CD4-positive, alpha-beta memory T cell (primary cell): ENCODE measurements at regions of chr12 and their contacts with region 1.

Region 1: DNA sequence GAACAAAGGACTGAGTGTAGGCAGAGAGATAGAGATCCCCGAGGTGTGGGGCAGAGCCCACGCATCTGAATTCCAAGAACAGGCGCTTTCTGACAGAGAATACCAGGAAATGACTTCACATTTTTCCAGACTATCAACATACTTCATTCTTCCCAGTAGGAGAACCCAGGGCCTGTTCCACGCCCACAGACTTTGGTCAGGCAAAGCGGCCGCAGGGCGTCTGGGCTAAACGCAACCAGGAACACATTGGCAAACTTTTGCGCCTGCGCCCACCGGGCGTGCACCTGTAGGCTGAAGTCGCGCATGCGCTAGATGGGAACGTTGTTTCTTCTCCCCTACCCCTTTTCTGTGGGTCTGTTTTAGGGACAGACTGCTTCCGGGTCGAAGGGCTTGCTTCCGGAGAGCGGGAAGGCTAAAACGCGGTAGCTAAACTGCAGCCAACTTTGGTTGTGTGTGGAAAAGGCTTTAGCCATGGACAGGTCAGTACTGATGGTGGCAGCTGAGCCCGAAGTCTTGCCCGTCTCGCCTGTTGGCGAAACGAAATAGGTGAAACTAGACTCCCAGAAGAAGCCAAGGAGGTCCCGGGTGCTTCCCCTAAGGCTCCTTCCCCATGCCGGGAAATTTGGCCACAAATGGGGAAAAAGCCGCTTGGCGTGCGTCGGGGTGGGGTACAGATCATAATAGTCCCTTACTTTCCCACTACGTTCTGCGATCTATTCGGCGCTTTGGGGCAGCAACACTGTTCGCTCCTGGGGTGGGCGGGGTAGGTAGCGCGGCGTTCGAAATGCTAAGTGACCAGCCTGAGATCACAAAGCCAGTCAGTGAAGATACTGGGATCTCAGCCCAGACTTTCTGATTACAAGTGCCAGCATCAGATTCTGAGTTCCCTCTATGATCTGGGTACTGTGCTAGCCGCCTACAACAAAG is at the start of gene NUP107:
- DNase-seq: peak; percentile 95 to 98 (median 95)
- H3K4me3 ChIP-seq: peak within 1 kb of the TSS; percentile 90 to 98
- H3K4me3 Mint-ChIP-seq: peak within 1 kb of the TSS; percentile 98 to 99 (median 98)
- H3K27ac ChIP-seq: peak within 1 kb of the TSS; percentile 85
- H3K27ac Mint-ChIP-seq: peak within 1 kb of the TSS; percentile 91 to 100 (median 99)
- H3K4me1 ChIP-seq: peaks cover 30% of the 10 kb centered on the region
- H3K4me1 Mint-ChIP-seq: peaks cover 14 to 44% (median 29%) of the 10 kb centered on the region in 4 donors
- H3K27me3 ChIP-seq: no peaks in the 10 kb centered on the region
- H3K27me3 Mint-ChIP-seq: no peaks in the 10 kb centered on the region
- total RNA-seq, gene NUP107: 68.9 to 70.7 TPM

Region 2: GRCh38 chr12:68331869-68332727 is 354.8 kb before region 1 on chr12 and contains the start of gene MDM1:
- CTCF ChIA-PET with region 1: no interaction called
- POLR2A ChIA-PET with region 1: interaction called, 3 read pairs
- intact Hi-C with region 1: loop called (anchors 1 kb)
- DNase-seq: peak; percentile 95 to 98 (median 96)
- H3K4me3 ChIP-seq: peak within 1 kb of the TSS; percentile 60 to 77
- H3K4me3 Mint-ChIP-seq: peak within 1 kb of the TSS; percentile 88 to 93 (median 90)
- H3K27ac ChIP-seq: peak within 1 kb of the TSS; percentile 58
- H3K27ac Mint-ChIP-seq: peak within 1 kb of the TSS; percentile 64 to 95 (median 91)
- H3K4me1 ChIP-seq: peaks cover 30% of the 10 kb centered on the region
- H3K4me1 Mint-ChIP-seq: peaks cover 32 to 49% (median 42%) of the 10 kb centered on the region in 4 donors
- H3K27me3 ChIP-seq: no peaks in the 10 kb centered on the region
- H3K27me3 Mint-ChIP-seq: peaks cover 0 to 2% of the 10 kb centered on the region in 2 donors
- total RNA-seq, gene MDM1: 27.0 to 29.4 TPM

Region 3: GRCh38 chr12:68451261-68452077 is 235.4 kb before region 1 on chr12:
- CTCF ChIA-PET with region 1: no interaction called
- POLR2A ChIA-PET with region 1: interaction called, 3 read pairs
- intact Hi-C with region 1: loop called (anchors 5 kb)
- DNase-seq: peak; percentile 24 to 57 (median 44)
- H3K4me3 ChIP-seq: peak overlapping the region in 1 of 2 donors; percentile 3
- H3K4me3 Mint-ChIP-seq: peak overlapping the region; percentile 66 to 90 (median 84)
- H3K27ac ChIP-seq: peak overlapping the region; percentile 46
- H3K27ac Mint-ChIP-seq: peak overlapping the region; percentile 74 to 92 (median 88)
- H3K4me1 ChIP-seq: peaks cover 96% of the 10 kb centered on the region
- H3K4me1 Mint-ChIP-seq: peaks cover 61 to 97% (median 86%) of the 10 kb centered on the region in 4 donors
- H3K27me3 ChIP-seq: no peaks in the 10 kb centered on the region
- H3K27me3 Mint-ChIP-seq: no peaks in the 10 kb centered on the region

Region 4: GRCh38 chr12:68587448-68587873 is 99.4 kb before region 1 on chr12:
- CTCF ChIA-PET with region 1: no interaction called
- POLR2A ChIA-PET with region 1: interaction called, 3 read pairs
- intact Hi-C with region 1: loop called (anchors 1 kb)
- DNase-seq: peak in 4 of 5 donors; percentile 36 to 50 (median 48)
- H3K4me3 ChIP-seq: no peak overlapping the region
- H3K4me3 Mint-ChIP-seq: peak overlapping the region in 5 of 8 donors; percentile 17 to 44 (median 22)
- H3K27ac ChIP-seq: no peak overlapping the region
- H3K27ac Mint-ChIP-seq: peak overlapping the region in 5 of 7 donors; percentile 15 to 80 (median 59)
- H3K4me1 ChIP-seq: peaks cover 37% of the 10 kb centered on the region
- H3K4me1 Mint-ChIP-seq: peaks cover 29 to 43% (median 37%) of the 10 kb centered on the region in 4 donors
- H3K27me3 ChIP-seq: no peaks in the 10 kb centered on the region
- H3K27me3 Mint-ChIP-seq: no peaks in the 10 kb centered on the region

Region 5: DNA sequence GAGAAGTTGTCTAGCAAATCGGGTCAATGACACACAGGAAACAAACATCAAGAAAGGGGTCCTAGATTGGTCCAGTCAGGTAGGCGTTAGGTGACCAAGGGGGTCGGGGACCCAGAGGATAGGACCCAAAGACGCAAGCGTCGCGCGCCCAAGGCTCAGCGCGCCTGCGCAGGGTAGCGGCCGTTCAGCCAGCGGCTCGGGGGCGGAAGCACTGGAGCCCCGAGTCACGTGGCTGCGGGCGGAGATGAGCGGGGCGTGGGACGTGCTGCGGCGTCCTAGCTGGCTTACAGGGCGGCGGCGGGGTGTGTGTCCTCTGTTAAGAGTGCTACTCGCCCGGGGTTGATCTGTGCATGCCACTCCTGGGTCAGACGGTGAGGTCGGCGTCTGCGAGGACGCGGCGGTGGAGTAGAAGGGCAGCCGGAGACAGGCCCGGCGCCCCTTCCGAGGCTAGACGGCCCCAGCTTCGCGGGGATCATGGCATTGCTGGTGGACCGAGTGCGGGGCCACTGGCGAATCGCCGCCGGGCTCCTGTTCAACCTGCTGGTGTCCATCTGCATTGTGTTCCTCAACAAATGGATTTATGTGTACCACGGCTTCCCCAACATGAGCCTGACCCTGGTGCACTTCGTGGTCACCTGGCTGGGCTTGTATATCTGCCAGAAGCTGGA is 59.2 kb after region 1 on chr12 and contains the start of gene SLC35E3:
- CTCF ChIA-PET with region 1: no interaction called
- POLR2A ChIA-PET with region 1: interaction called, 4 read pairs
- intact Hi-C with region 1: loop called (anchors 1 kb)
- DNase-seq: peak; percentile 86 to 91 (median 88)
- H3K4me3 ChIP-seq: peak within 1 kb of the TSS; percentile 74 to 78
- H3K4me3 Mint-ChIP-seq: peak within 1 kb of the TSS; percentile 92 to 99 (median 98)
- H3K27ac ChIP-seq: peak within 1 kb of the TSS; percentile 69
- H3K27ac Mint-ChIP-seq: peak within 1 kb of the TSS; percentile 89 to 97 (median 93)
- H3K4me1 ChIP-seq: peaks cover 21% of the 10 kb centered on the region
- H3K4me1 Mint-ChIP-seq: peaks cover 26 to 46% (median 35%) of the 10 kb centered on the region in 4 donors
- H3K27me3 ChIP-seq: no peaks in the 10 kb centered on the region
- H3K27me3 Mint-ChIP-seq: no peaks in the 10 kb centered on the region
- total RNA-seq, gene SLC35E3: 8.2 to 11.5 TPM